Motor neuron (in vitro differentiated cells): ENCODE measurements at regions of chr16 and their contacts with region 1.

Region 1: GRCh38 chr16:5490499-5490898 is 392.9 kb upstream of the EEF2KMT start:
- ATAC-seq: peak in 6 of 8 experiments; percentile 28 to 84 (median 73)
- H3K4me3 ChIP-seq: no peak overlapping the region
- H3K27ac ChIP-seq: no peak overlapping the region
- H3K4me1 ChIP-seq: no peaks in the 10 kb centered on the region

Region 2: GRCh38 chr16:5228369-5228768 is 262.1 kb before region 1 on chr16:
- in situ Hi-C with region 1: loop called in 6 of 9 experiments (anchors 25 kb)
- ATAC-seq: peak in 1 of 8 experiments; percentile 29
- H3K4me3 ChIP-seq: no peak overlapping the region
- H3K27ac ChIP-seq: no peak overlapping the region
- H3K4me1 ChIP-seq: peaks cover 13 to 14% of the 10 kb centered on the region in 2 donors

Region 3: DNA sequence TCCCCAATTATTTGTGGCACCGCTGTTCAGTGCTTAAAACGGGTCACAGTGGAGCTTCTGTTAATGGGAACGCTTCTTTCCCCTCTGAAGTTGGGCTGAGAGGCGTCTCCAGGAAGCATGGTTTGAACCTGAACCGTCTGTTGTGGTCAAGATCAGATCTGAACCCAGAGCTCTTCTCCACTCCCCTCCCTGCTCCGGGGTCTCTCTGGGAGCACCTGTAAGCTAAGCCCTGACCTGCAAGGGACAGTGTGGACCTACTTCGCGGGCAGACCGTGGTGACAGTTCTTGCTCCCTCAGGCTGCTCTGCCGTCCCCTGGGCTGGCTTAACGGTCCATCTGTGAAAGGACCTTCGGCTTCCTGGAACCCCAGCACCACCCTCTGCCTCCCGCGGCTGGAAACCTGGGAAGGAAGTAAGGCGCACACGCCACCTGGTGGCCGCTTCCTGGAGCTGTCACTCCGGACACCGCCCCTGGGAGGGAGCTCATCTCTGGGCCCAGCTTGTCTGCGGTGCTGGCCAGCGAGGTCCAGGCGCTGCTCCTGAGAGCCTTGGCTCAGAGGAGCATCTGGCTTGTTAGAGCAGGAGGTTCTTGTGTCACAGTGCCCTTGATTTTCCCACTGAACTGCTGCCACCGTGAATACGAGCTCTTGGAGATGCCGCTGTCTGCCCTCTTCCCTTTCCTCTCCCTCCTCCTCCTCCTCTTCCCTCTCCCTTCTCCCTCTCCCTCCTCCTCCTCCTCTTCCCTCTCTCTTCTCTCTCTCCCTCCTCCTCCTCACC is 125.6 kb after region 1 on chr16:
- in situ Hi-C with region 1: loop called in 1 of 9 experiments (anchors 10 kb)
- ATAC-seq: peak; percentile 33 to 100 (median 99)
- H3K4me3 ChIP-seq: peak overlapping the region in 1 of 5 donors; percentile 15
- H3K27ac ChIP-seq: no peak overlapping the region
- H3K4me1 ChIP-seq: peaks cover 3 to 17% of the 10 kb centered on the region in 2 donors

Region 4: DNA sequence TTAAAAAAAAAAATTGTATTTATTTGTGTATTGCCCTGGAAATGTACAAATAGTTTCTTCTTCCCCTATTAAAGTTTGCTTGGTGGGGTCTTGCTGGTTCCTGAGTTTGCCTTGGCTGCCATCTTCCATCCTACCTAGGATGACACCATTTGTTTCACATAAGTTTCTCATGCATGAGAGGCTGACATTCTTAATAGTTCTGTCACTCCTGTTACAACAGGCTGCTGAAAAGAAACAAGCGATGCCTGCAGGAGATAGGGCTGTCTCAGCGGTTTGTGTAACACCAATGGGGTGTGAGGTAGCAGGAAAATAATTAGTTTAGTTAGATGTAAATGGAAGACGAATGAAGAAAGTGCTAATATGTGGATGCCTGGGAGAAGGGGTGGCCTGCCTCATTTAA is 841.3 kb after region 1 on chr16:
- in situ Hi-C with region 1: no loop called
- ATAC-seq: no peak
- H3K4me3 ChIP-seq: no peak overlapping the region
- H3K27ac ChIP-seq: no peak overlapping the region
- H3K4me1 ChIP-seq: peaks cover 0 to 1% of the 10 kb centered on the region in 2 donors

Region 5: DNA sequence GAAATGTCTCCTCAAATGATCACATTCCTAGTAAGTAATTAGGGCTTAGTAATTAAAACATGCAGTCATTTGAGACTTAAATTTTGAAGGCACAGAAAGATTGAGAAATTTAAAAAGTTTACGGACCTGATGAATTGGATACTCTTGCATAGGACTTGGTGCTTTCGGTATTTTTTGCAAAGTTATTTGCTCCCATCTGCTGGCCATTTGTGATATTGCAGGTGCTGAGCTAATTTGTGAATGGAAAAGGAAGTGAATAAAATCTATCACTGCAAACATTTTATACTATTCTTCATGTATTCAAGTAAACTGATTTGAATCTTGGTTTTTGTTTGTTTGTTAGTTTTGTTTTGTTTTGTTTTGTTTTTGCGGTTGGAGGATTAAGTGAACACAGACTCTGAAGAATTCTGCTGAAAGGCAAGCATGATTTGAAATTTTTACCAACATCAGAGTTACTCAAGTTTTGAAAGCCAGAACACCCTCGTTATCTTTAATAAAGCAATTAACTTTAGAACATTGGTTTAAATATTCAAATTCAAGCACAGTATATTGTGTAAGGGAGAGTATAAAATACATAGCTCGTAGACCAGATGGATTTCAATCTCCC is 1152.7 kb after region 1 on chr16:
- in situ Hi-C with region 1: loop called in 1 of 9 experiments (anchors 25 kb)
- ATAC-seq: peak in 3 of 8 experiments; percentile 26 to 34 (median 32)
- H3K4me3 ChIP-seq: no peak overlapping the region
- H3K27ac ChIP-seq: no peak overlapping the region
- H3K4me1 ChIP-seq: peaks cover 0 to 44% of the 10 kb centered on the region in 2 donors